ENCODE measurements at regions of chr13 and their contacts with region 1.

Region 1: DNA sequence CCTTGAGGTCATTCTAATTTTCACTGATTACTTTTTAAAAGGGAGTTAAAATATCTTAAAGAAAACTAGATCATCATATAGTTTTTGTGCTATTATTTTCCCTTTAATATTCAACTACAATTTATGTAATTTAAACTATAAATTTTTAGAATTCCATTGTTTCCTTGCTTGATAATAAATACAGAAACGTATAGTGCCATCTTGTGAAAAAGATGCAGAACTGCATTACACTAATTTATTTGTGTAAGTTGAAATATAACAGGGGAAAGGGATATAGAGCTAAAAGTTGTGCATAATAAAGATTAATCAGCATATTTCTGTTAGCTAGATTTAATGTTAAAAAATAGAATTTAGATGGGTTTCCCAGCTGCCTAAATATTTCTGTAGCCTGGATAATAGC is 61.5 kb upstream of the TDRD3 start:
- DNase-seq: peak; percentile 64
- H3K4me3 ChIP-seq: no peak overlapping the region
- H3K27ac ChIP-seq: peak overlapping the region; percentile 88
- H3K4me1 ChIP-seq: peaks cover 53% of the 10 kb centered on the region
- H3K27me3 ChIP-seq: no peaks in the 10 kb centered on the region
- CTCF ChIP-seq: peak; percentile 82

Region 2: GRCh38 chr13:59112221-59112718 is 1223.3 kb before region 1 on chr13:
- CTCF ChIA-PET with region 1: no interaction called
- POLR2A ChIA-PET with region 1: no interaction called
- intact Hi-C with region 1: loop called (anchors 10 kb)
- DNase-seq: peak; percentile 79
- H3K4me3 ChIP-seq: no peak overlapping the region
- H3K27ac ChIP-seq: peak overlapping the region; percentile 16
- H3K4me1 ChIP-seq: peaks cover 22% of the 10 kb centered on the region
- H3K27me3 ChIP-seq: no peaks in the 10 kb centered on the region
- CTCF ChIP-seq: no peak

Region 3: GRCh38 chr13:60583911-60584753 is 248.6 kb after region 1 on chr13:
- CTCF ChIA-PET with region 1: no interaction called
- POLR2A ChIA-PET with region 1: no interaction called
- intact Hi-C with region 1: no loop called
- DNase-seq: peak; percentile 93
- H3K4me3 ChIP-seq: peak overlapping the region; percentile 23
- H3K27ac ChIP-seq: peak overlapping the region; percentile 68
- H3K4me1 ChIP-seq: peaks cover 27% of the 10 kb centered on the region
- H3K27me3 ChIP-seq: no peaks in the 10 kb centered on the region
- CTCF ChIP-seq: no peak

Region 4: DNA sequence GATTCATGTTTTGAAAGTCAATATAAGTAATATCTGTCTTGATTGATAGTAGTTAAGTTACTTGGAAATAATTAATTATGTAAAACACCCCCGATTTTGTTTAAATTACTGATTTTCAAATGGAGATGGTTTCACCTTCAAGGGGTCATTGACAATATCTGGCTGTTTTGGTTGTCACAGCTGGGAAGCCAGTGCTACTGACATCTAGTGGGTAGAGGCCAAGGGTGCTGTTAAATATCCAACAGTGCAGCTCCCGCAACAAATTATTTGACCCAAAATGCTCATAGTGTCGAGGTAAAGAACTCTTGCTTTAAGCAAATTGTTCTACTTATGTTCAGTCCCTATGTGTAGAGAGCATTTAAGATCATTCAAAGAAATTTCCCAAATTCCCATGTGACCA is 1130.7 kb after region 1 on chr13:
- CTCF ChIA-PET with region 1: no interaction called
- POLR2A ChIA-PET with region 1: no interaction called
- intact Hi-C with region 1: no loop called
- DNase-seq: no peak
- H3K4me3 ChIP-seq: no peak overlapping the region
- H3K27ac ChIP-seq: no peak overlapping the region
- H3K4me1 ChIP-seq: no peaks in the 10 kb centered on the region
- H3K27me3 ChIP-seq: no peaks in the 10 kb centered on the region
- CTCF ChIP-seq: peak; percentile 40; the same call in 1 of the 2 replicates

Measured in A673 (cell line).